Activated naive CD4-positive, alpha-beta T cell treated with anti-CD3 and anti-CD28 coated beads for 36 hours (primary cell): ENCODE measurements at regions of chr19 and their contacts with region 1.

Region 1: GRCh38 chr19:32691291-32691951 is at the start of gene NUDT19:
- DNase-seq: peak; percentile 90
- H3K4me3 Mint-ChIP-seq: peak within 1 kb of the TSS; percentile 93
- H3K27ac Mint-ChIP-seq: peak within 1 kb of the TSS; percentile 88
- H3K4me1 Mint-ChIP-seq: peaks cover 49% of the 10 kb centered on the region
- H3K27me3 Mint-ChIP-seq: no peaks in the 10 kb centered on the region
- total RNA-seq, gene NUDT19: 11.9 to 13.6 TPM

Region 2: DNA sequence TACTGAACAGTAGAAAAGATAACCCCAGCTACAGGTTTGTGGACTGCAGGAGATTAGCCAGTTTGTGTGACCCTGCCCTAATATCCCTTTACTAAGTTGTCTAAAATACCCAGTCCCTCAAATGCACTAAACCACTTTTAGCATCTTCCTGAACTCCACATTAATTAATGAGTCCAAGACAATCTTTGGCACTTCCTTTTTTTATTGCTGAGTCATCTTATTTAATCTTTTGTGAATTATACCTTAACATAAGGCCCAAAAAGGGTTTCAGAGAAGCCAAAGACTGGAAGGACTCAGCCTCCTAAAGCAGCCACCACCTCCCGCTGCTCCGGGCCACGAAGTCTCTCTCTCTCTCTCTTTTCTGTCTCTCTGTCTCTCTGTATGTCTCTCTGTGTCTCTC is 159.2 kb before region 1 on chr19:
- CTCF ChIA-PET with region 1: no interaction called
- intact Hi-C with region 1: no loop called
- DNase-seq: no peak
- H3K4me3 Mint-ChIP-seq: no peak overlapping the region
- H3K27ac Mint-ChIP-seq: no peak overlapping the region
- H3K4me1 Mint-ChIP-seq: no peaks in the 10 kb centered on the region
- H3K27me3 Mint-ChIP-seq: no peaks in the 10 kb centered on the region

Region 3: GRCh38 chr19:32674959-32675719 is 16.3 kb before region 1 on chr19 and contains the start of gene ANKRD27:
- CTCF ChIA-PET with region 1: interaction called, 4 read pairs
- intact Hi-C with region 1: loop called (anchors 1 kb)
- DNase-seq: peak; percentile 97
- H3K4me3 Mint-ChIP-seq: peak within 1 kb of the TSS; percentile 89
- H3K27ac Mint-ChIP-seq: peak within 1 kb of the TSS; percentile 46
- H3K4me1 Mint-ChIP-seq: peaks cover 22% of the 10 kb centered on the region
- H3K27me3 Mint-ChIP-seq: peaks cover 14% of the 10 kb centered on the region
- total RNA-seq, gene ANKRD27: 28.8 to 29.7 TPM

Region 4: DNA sequence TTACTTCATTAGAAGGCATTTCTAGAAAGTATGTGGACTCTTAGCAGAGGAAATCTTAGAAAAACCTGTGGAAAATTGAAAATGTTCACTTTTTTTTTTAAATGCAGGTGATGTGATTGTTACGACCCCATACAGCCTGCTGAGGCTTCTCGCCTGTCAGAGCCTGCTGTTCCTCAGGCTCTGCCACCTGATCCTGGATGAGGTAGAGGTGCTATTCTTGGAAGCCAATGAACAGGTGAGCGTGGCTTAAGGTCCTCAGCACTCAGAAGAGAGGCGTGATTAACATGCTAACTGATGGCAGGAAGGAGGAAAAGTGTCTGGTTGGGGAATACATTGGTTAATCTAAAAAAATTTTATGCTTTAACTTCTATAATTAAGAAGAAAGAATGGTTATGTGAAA is 106.8 kb after region 1 on chr19:
- CTCF ChIA-PET with region 1: no interaction called
- intact Hi-C with region 1: loop called (anchors 1 kb)
- DNase-seq: no peak
- H3K4me3 Mint-ChIP-seq: no peak overlapping the region
- H3K27ac Mint-ChIP-seq: no peak overlapping the region
- H3K4me1 Mint-ChIP-seq: peaks cover 44% of the 10 kb centered on the region
- H3K27me3 Mint-ChIP-seq: no peaks in the 10 kb centered on the region

Region 5: GRCh38 chr19:33064792-33065550 is 373.6 kb after region 1 on chr19 and contains the start of gene RHPN2:
- CTCF ChIA-PET with region 1: no interaction called
- intact Hi-C with region 1: loop called (anchors 5 kb)
- DNase-seq: peak; percentile 49
- H3K4me3 Mint-ChIP-seq: peak within 1 kb of the TSS; percentile 66
- H3K27ac Mint-ChIP-seq: no peak within 1 kb of the TSS
- H3K4me1 Mint-ChIP-seq: peaks cover 2% of the 10 kb centered on the region
- H3K27me3 Mint-ChIP-seq: peaks cover 22% of the 10 kb centered on the region
- total RNA-seq, gene RHPN2: 3.1 to 3.4 TPM

Region 6: DNA sequence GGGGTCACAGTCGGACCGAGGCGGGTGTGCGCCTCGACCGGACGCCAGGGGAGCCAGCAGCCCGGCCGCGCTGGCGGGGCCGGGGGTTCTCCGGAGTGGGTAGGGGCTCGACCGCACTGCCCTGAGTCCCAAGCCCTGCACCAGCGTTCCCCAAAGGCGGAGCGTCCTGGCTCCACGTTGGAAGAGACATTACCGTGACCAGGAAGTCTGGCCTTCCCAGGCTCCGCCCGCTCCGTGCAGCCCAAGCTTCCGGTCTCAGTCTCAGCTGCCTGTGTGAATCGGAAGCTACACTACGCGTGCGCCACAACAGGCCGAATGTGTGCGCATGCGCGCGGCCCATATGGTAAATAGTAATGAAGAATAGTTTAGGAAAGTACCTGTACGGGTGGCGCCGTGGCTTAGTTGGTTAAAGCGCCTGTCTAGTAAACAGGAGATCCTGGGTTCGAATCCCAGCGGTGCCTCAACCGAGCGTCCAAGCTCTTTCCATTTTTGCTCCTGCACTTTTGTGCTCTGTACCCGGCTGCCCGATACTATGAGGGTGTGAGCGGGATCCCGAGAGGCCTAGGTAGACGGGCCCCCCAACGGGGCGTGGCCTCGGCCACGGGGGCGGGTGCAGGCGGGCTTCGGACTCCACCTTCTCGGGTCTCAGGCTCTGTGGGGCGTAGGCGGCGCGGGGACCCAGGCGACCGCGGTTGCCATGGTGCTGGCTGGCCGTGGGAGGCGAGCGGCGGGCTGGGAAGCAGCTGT is 485.4 kb after region 1 on chr19:
- CTCF ChIA-PET with region 1: no interaction called
- intact Hi-C with region 1: loop called (anchors 1 kb)
- DNase-seq: peak; percentile 96
- H3K4me3 Mint-ChIP-seq: peak overlapping the region; percentile 98
- H3K27ac Mint-ChIP-seq: peak overlapping the region; percentile 95
- H3K4me1 Mint-ChIP-seq: peaks cover 29% of the 10 kb centered on the region
- H3K27me3 Mint-ChIP-seq: peaks cover 2% of the 10 kb centered on the region

Region 7: DNA sequence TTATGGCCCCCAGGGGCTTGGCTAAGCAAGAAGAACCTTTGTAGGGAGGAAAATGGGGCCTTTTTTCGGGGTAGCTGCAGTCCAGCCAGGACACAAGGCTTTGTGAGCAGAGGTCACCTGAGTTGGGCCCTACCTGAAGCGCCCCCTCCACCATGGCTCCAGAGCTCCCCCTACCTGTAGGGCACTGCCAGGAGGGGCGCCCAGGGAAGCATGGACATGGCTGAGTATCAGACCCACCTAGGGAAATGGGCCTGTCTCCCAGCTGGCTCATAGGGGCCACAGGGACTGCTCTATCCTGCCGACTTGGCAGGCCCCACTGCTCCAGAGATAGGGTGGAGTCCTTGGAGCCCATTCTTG is 619.9 kb after region 1 on chr19:
- CTCF ChIA-PET with region 1: no interaction called
- intact Hi-C with region 1: no loop called
- DNase-seq: peak; percentile 34
- H3K4me3 Mint-ChIP-seq: no peak overlapping the region
- H3K27ac Mint-ChIP-seq: no peak overlapping the region
- H3K4me1 Mint-ChIP-seq: no peaks in the 10 kb centered on the region
- H3K27me3 Mint-ChIP-seq: peaks cover 11% of the 10 kb centered on the region